ENCODE measurements at regions of chr11 and their contacts with region 1.

Region 1: DNA sequence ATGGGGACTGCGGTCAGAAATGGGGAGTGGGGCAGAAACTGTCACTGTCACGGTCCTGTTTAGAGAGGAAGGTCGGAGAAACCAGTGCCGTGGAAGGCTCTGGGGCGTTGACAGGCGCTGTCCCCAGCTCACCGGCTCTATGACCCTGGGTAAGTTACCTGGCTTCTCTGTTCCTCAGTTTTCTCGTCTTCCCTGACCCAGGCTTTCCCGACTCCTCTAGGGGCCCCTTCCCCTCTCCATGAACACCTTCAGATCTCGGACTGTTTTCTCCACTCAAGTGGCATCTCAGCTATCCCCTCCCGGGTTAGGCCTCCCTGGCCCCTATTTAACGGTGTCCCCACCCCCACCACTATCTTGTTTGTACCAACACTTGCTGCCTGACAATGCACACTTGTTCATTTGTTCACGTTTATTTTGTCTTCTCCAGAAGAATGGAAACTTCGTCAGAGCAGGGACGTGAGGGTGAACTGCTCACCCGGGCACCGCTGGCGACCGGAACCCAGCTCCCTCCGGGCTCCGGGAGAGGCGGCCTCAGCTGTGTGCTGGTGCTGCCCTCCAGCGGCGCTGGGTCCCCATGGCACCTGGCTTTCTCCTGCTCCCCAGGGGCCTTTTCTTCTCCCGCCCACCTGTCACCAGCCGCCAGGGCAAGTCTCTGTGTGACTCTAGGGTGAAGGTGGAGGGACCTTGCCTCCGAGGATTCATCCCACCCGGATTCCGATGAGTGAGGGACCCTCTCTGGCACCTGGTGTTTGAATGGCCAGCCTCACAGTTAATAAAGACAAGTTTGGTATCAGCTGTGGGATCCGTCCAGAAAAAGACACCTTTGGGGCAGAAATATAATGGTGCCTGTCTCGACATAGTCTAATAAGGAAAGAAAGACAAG is 33.1 kb upstream of the SLC35C1 start:
- DNase-seq: peak; percentile 84
- H3K4me3 Mint-ChIP-seq: peak overlapping the region; percentile 77
- H3K27ac Mint-ChIP-seq: peak overlapping the region; percentile 17
- H3K4me1 Mint-ChIP-seq: peaks cover 24% of the 10 kb centered on the region
- H3K27me3 Mint-ChIP-seq: peaks cover 13% of the 10 kb centered on the region

Region 2: GRCh38 chr11:45339729-45340519 is 431.9 kb before region 1 on chr11:
- CTCF ChIA-PET with region 1: interaction called, 10 read pairs
- POLR2A ChIA-PET with region 1: no interaction called
- DNase-seq: peak; percentile 92
- H3K4me3 Mint-ChIP-seq: peak overlapping the region; percentile 47
- H3K27ac Mint-ChIP-seq: no peak overlapping the region
- H3K4me1 Mint-ChIP-seq: peaks cover 12% of the 10 kb centered on the region
- H3K27me3 Mint-ChIP-seq: peaks cover 20% of the 10 kb centered on the region

Region 3: DNA sequence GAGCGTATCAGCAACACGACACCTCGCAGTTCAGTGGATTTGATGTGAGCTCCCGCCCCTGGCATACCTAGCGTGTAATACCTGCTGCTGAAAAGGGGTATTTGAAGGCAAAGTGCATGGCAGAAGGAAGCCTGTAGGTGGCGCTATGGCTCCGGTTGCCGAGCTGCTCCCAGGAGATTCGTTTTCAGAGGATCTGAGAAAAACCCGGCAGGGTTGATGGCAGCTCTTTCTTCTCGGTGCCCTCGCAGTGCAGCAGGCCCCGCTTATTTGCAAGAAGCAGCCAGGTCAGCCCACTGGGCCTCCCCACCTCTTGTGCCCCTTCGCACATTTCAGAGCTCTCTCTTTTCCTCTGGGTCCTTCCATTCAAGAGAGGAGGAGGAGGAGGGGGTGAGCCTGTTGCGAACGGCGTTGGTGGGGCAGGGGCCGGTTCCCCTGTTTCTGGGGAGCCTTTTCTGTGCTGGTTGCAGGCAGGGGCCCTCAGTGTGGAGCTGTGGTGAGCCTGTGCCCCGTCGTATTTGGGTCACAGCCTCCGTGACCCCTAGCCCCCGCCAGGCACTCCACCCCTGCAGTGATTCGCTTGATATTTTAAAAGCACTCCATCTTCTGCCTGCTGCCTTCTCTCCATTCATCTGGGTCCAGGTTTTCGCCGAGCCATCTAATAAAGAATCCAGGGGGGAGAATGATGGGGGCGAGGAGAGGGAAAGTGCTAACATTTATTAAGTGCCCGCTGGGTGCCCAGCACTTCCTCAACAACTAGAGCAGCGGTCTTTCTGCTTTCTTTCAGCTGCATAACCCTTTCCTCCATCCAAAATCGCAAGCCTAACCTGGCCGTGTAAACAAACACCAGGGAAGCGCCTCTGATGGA is 400.3 kb before region 1 on chr11:
- CTCF ChIA-PET with region 1: interaction called, 27 read pairs
- POLR2A ChIA-PET with region 1: no interaction called
- DNase-seq: peak; percentile 63
- H3K4me3 Mint-ChIP-seq: no peak overlapping the region
- H3K27ac Mint-ChIP-seq: no peak overlapping the region
- H3K4me1 Mint-ChIP-seq: no peaks in the 10 kb centered on the region
- H3K27me3 Mint-ChIP-seq: peaks cover 9% of the 10 kb centered on the region

Region 4: GRCh38 chr11:45736424-45736823 is 35.4 kb before region 1 on chr11:
- CTCF ChIA-PET with region 1: no interaction called
- POLR2A ChIA-PET with region 1: no interaction called
- DNase-seq: no peak
- H3K4me3 Mint-ChIP-seq: no peak overlapping the region
- H3K27ac Mint-ChIP-seq: no peak overlapping the region
- H3K4me1 Mint-ChIP-seq: no peaks in the 10 kb centered on the region
- H3K27me3 Mint-ChIP-seq: peaks cover 14% of the 10 kb centered on the region

Region 5: GRCh38 chr11:45798793-45799441 is 27.1 kb after region 1 on chr11:
- CTCF ChIA-PET with region 1: interaction called, 12 read pairs
- POLR2A ChIA-PET with region 1: interaction called, 16 read pairs
- DNase-seq: no peak
- H3K4me3 Mint-ChIP-seq: no peak overlapping the region
- H3K27ac Mint-ChIP-seq: no peak overlapping the region
- H3K4me1 Mint-ChIP-seq: peaks cover 3% of the 10 kb centered on the region
- H3K27me3 Mint-ChIP-seq: peaks cover 5% of the 10 kb centered on the region

Region 6: GRCh38 chr11:45804761-45805304 is 33.0 kb after region 1 on chr11 and contains the start of gene SLC35C1:
- CTCF ChIA-PET with region 1: interaction called, 20 read pairs
- POLR2A ChIA-PET with region 1: interaction called, 16 read pairs
- DNase-seq: peak; percentile 98
- H3K4me3 Mint-ChIP-seq: peak within 1 kb of the TSS; percentile 91
- H3K27ac Mint-ChIP-seq: peak within 1 kb of the TSS; percentile 83
- H3K4me1 Mint-ChIP-seq: peaks cover 44% of the 10 kb centered on the region
- H3K27me3 Mint-ChIP-seq: no peaks in the 10 kb centered on the region
- total RNA-seq, gene SLC35C1: 15.0 to 17.5 TPM

Region 7: GRCh38 chr11:45834298-45834756 is 62.5 kb after region 1 on chr11:
- CTCF ChIA-PET with region 1: interaction called, 30 read pairs
- POLR2A ChIA-PET with region 1: interaction called, 8 read pairs
- DNase-seq: peak; percentile 68
- H3K4me3 Mint-ChIP-seq: peak overlapping the region; percentile 77
- H3K27ac Mint-ChIP-seq: peak overlapping the region; percentile 91
- H3K4me1 Mint-ChIP-seq: peaks cover 39% of the 10 kb centered on the region
- H3K27me3 Mint-ChIP-seq: peaks cover 12% of the 10 kb centered on the region

Region 8: GRCh38 chr11:46006418-46007070 is 234.7 kb after region 1 on chr11:
- CTCF ChIA-PET with region 1: interaction called, 19 read pairs
- POLR2A ChIA-PET with region 1: no interaction called
- DNase-seq: no peak
- H3K4me3 Mint-ChIP-seq: no peak overlapping the region
- H3K27ac Mint-ChIP-seq: no peak overlapping the region
- H3K4me1 Mint-ChIP-seq: peaks cover 2% of the 10 kb centered on the region
- H3K27me3 Mint-ChIP-seq: no peaks in the 10 kb centered on the region